ENCODE measurements at regions of chr9 and their contacts with region 1.

Region 1: GRCh38 chr9:68653141-68653595 is 51.9 kb upstream of the PIP5K1B start:
- DNase-seq: no peak
- ATAC-seq: no peak
- H3K4me3 ChIP-seq: no peak overlapping the region
- H3K27ac ChIP-seq: no peak overlapping the region
- H3K4me1 ChIP-seq: no peaks in the 10 kb centered on the region
- H3K27me3 ChIP-seq: no peaks in the 10 kb centered on the region
- CTCF ChIP-seq: no peak

Region 2: GRCh38 chr9:68690088-68690487 is 36.9 kb after region 1 on chr9:
- intact Hi-C with region 1: loop called in 1 of 2 experiments (anchors 5 kb)
- DNase-seq: no peak
- ATAC-seq: peak; percentile 53 to 82 (median 76)
- H3K4me3 ChIP-seq: no peak overlapping the region
- H3K27ac ChIP-seq: no peak overlapping the region
- H3K4me1 ChIP-seq: no peaks in the 10 kb centered on the region
- H3K27me3 ChIP-seq: peaks cover 0 to 3% (median 0%) of the 10 kb centered on the region in 3 donors
- CTCF ChIP-seq: no peak

Region 3: DNA sequence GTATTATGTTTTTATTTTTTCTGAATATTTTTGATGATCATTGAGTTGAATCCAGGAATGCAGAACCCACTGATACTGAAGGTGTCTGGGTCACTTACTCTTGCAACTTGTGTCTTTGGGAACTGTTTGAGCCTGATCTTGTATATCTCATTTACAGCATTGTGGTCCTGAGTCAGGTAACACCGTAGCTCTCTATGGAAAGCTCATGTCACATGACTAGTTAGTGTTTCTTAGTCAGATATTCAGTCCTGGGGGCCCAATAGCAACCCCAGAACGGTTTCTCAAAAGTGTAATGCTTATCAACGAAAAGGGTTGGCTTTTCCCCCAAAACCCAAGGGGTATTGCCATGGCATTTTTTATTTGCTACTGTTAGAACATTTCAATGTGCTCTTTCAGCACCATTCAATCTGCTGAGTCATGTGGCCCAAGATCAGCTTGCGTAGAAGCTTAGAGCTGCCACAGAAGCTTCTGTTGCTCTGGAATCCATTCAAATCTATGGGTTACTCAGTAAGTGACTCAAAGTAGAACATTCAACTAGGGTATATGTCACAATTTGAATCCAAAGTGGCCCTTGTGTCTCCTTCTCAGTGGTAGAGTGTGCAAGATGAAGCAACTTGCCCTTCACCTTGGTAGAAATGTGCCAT is 1118.7 kb after region 1 on chr9:
- intact Hi-C with region 1: no loop called
- DNase-seq: no peak
- ATAC-seq: no peak
- H3K4me3 ChIP-seq: no peak overlapping the region
- H3K27ac ChIP-seq: no peak overlapping the region
- H3K4me1 ChIP-seq: no peaks in the 10 kb centered on the region
- H3K27me3 ChIP-seq: no peaks in the 10 kb centered on the region
- CTCF ChIP-seq: no peak

Measured in psoas muscle (tissue), 8 donors.